Activated CD4-positive, alpha-beta T cell treated with anti-CD3 and anti-CD28 coated beads, Interleukin-2, amount 10 ng/mL, durations not matched to agents 24 days and 14 days (primary cell): ENCODE measurements at regions of chr1 and their contacts with region 1.

Region 1: GRCh38 chr1:167059045-167059808 is 30.9 kb downstream of the GPA33 start:
- DNase-seq: peak; percentile 92
- H3K4me3 Mint-ChIP-seq: no peak overlapping the region
- H3K27ac Mint-ChIP-seq: peak overlapping the region; percentile 52
- H3K4me1 Mint-ChIP-seq: peaks cover 10% of the 10 kb centered on the region
- H3K27me3 Mint-ChIP-seq: no peaks in the 10 kb centered on the region

Region 2: DNA sequence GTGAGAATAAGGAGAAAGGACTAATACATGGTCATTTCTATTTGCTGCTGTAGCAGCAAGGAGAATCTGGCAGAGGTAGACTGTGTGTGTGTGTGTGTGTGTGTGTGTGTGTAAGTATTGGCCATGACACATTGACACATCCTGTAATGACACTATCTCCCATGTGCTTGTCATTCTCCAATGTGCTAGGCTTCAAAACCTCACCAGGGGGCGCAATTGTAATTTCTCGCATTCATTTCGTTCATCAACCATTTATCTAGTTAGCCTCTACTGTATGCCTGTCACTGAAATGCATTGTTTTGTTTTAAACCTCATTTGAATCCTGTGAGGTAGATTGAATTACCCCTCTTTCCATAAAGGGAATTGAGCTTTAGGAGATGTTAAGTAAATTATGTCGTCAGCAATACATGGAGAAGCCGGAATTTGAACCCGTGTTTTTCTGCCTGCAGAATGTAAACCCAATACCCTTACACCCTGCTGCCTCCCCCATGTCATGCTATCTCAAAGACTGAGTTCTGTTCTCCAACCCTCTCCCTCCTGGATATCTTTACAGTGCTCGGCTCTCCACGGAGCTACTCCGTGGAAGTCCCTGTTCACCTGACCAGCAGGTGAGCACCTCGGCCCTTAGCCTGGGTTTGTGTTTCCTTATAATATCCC is 1131.0 kb before region 1 on chr1:
- intact Hi-C with region 1: loop called (anchors 5 kb)
- DNase-seq: peak; percentile 87
- H3K4me3 Mint-ChIP-seq: no peak overlapping the region
- H3K27ac Mint-ChIP-seq: peak overlapping the region; percentile 13
- H3K4me1 Mint-ChIP-seq: peaks cover 11% of the 10 kb centered on the region
- H3K27me3 Mint-ChIP-seq: peaks cover 10% of the 10 kb centered on the region

Region 3: DNA sequence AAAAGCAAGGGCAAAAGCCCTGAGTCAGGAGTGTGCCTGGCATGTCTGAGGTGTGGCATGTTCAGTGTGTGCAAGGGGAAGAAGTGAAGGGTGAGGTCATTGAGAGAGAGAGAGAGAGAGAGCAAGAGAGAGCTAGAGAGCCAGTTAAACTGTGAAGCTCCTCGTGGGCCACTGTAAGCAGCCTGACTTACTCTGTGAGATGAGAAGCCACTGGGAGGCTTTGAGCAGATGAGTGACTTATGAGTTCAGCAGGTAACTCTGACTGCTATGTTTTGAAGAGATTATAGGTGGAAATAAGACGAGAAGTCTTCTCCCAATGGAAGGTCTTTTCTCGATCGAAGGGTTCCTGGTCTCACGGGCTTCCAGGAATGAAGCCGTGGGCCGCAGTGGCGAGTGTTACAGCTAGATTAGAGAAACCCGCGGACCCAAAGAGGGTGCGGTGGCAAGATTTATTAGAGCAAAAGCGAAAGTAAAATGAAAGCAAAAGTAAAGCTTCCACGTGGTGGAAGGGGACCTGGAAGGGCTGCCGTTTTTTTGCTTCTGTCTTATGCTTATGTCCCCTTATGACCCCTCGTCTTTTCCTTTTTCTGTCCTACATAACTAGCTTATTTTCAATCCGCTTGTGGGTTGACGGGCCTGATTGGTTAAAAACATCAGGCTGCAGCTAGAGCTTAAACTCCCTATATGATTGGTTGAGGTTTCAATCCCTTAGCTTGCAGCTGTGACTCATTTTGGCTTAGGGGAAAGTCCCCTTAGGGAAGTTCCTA is 569.4 kb before region 1 on chr1:
- intact Hi-C with region 1: loop called (anchors 5 kb)
- DNase-seq: peak; percentile 85
- H3K4me3 Mint-ChIP-seq: no peak overlapping the region
- H3K27ac Mint-ChIP-seq: no peak overlapping the region
- H3K4me1 Mint-ChIP-seq: peaks cover 9% of the 10 kb centered on the region
- H3K27me3 Mint-ChIP-seq: peaks cover 1% of the 10 kb centered on the region

Region 4: GRCh38 chr1:166884040-166884642 is 175.1 kb before region 1 on chr1:
- intact Hi-C with region 1: loop called (anchors 1 kb)
- DNase-seq: peak; percentile 76
- H3K4me3 Mint-ChIP-seq: peak overlapping the region; percentile 5
- H3K27ac Mint-ChIP-seq: no peak overlapping the region
- H3K4me1 Mint-ChIP-seq: peaks cover 16% of the 10 kb centered on the region
- H3K27me3 Mint-ChIP-seq: peaks cover 39% of the 10 kb centered on the region

Region 5: DNA sequence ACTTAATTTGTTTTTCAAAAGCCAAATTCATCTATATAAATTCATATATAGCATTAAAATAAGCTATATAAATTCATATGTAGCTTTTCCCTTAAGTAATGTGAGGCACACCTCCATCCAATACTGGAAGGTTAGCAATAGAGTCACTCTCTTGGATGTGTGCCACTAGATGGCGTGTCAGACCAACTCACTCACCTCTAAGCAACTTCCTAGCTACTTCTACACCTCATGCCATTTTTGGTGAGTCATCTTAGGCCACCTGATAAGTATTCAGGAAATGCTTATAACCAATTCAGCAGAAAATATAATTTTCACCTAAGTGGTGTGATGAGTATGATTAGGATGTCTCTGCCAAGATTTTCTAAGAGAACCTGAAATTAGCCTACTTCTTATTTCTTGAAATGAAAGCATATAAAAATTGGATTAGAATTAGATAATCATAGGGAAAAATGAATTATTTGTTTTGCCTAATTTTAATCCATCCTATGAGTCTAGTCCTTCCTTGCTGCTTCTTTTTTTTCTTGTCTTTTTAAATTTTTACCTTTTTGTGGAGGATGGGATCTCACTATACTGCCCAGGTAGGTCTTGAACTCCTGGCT is 148.7 kb before region 1 on chr1:
- intact Hi-C with region 1: loop called (anchors 1 kb)
- DNase-seq: peak; percentile 93
- H3K4me3 Mint-ChIP-seq: no peak overlapping the region
- H3K27ac Mint-ChIP-seq: no peak overlapping the region
- H3K4me1 Mint-ChIP-seq: peaks cover 24% of the 10 kb centered on the region
- H3K27me3 Mint-ChIP-seq: peaks cover 5% of the 10 kb centered on the region

Region 6: DNA sequence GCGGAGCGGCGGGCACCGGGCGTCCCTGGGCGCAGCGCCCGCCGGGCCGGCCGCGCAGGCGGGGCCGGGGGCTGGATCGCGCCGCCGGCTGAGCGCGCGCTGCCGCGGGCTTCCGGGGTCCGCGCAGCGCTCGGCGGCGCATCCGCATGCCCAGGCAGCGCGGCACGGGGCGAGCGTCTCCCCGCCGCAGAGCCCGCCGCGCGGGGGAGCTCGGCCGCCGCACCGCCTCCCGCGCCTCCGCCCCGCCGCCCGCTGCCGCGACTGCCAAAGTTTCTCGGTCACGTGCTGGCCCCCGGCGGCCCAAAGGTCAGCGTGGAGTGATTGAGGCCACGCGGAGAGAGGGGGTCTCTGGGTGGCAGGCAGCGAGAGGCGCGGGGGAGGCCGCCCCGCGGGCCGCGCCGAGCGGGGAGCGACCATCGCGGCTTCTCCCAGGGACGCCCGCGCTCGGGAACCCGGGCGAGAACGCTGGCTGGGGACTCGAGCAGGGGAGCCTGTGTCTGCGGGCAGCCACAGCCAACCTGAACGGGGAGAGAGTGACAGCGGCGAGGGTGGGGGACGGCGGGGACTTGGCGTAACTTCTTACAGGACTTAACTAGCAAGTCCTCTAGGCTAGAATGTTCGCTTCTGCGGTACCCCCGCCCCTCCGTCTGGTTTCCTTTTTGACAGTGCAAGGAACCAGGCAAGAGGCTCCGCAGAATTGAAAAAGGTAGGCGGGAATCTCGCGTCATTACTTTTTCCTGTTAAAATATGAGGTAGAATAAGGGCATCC is 83.7 kb before region 1 on chr1 and contains the start of gene ILDR2:
- intact Hi-C with region 1: loop called (anchors 5 kb)
- DNase-seq: peak; percentile 87
- H3K4me3 Mint-ChIP-seq: peak within 1 kb of the TSS; percentile 96
- H3K27ac Mint-ChIP-seq: peak within 1 kb of the TSS; percentile 96
- H3K4me1 Mint-ChIP-seq: peaks cover 47% of the 10 kb centered on the region
- H3K27me3 Mint-ChIP-seq: peaks cover 32% of the 10 kb centered on the region
- total RNA-seq, gene ILDR2: 10.3 and 12.5 TPM in 2 replicates